Activated T-helper 2 cell treated with anti-CD3 and anti-CD28 coated beads, Interferon-gamma antibody, Interleukin-2, Interleukin-4, amounts not matched to agents 10 μg/mL and 5 μg/mL and 100 μg/mL, durations not matched to agents 14 hours and 24 hours and 36 hours (primary cell): ENCODE measurements at regions of chr3 and their contacts with region 1.

Region 1: GRCh38 chr3:37974121-37975083 is 16.2 kb upstream of the VILL start:
- DNase-seq: peak; percentile 51
- H3K4me3 Mint-ChIP-seq: no peak overlapping the region
- H3K27ac Mint-ChIP-seq: no peak overlapping the region
- H3K4me1 Mint-ChIP-seq: peaks cover 6% of the 10 kb centered on the region
- H3K27me3 Mint-ChIP-seq: no peaks in the 10 kb centered on the region

Region 2: GRCh38 chr3:37855363-37855970 is 118.9 kb before region 1 on chr3:
- intact Hi-C with region 1: loop called (anchors 2 kb)
- DNase-seq: peak; percentile 65
- H3K4me3 Mint-ChIP-seq: no peak overlapping the region
- H3K27ac Mint-ChIP-seq: no peak overlapping the region
- H3K4me1 Mint-ChIP-seq: peaks cover 8% of the 10 kb centered on the region
- H3K27me3 Mint-ChIP-seq: no peaks in the 10 kb centered on the region

Region 3: GRCh38 chr3:37993820-37994638 is 19.6 kb after region 1 on chr3:
- intact Hi-C with region 1: loop called (anchors 1 kb)
- DNase-seq: peak; percentile 54
- H3K4me3 Mint-ChIP-seq: peak overlapping the region; percentile 83
- H3K27ac Mint-ChIP-seq: peak overlapping the region; percentile 87
- H3K4me1 Mint-ChIP-seq: peaks cover 43% of the 10 kb centered on the region
- H3K27me3 Mint-ChIP-seq: no peaks in the 10 kb centered on the region

Region 4: DNA sequence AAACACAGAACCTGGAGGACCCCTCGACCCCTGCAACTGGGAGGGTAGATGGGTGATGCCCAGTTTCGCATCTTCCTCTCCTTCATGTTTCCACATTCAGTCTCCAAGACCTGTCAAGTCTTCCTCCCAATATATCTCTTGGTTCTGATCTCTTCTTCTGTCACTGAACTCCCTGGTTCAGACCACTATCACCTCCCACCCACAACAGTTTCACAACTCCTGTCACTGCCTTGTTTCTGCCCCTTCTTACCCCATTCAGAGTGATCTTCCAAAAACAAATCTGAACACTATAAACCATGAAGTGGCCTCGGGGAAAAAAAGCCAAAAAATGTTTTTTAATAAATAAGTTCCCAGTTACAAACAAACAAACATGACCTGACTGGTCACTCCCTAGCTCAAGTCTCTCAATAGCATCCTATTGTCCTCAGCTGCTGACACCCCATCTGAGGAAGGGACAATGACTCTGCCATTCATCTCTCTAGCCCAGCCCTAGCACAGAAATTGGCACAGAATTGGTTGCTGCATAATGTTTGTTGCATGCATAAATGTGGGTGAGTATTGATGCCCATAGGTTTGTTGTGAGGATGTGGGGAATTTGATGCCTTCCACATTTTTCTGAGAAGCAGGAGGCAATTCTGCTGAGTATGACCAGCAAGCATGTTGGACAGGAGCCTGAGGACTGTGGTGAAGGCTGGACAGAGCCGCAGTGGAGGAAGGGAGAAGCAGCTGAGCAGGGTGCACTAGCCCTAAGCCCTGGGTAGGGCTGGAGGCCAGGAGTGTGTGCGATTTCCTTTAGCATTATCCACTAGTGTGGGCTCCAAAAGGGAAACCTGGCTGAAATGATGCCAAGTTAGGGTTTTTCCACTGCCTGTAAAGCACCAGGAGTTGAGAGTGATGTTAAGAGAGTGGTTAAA is 360.0 kb after region 1 on chr3:
- intact Hi-C with region 1: no loop called
- DNase-seq: no peak
- H3K4me3 Mint-ChIP-seq: no peak overlapping the region
- H3K27ac Mint-ChIP-seq: no peak overlapping the region
- H3K4me1 Mint-ChIP-seq: no peaks in the 10 kb centered on the region
- H3K27me3 Mint-ChIP-seq: peaks cover 7% of the 10 kb centered on the region

Region 5: DNA sequence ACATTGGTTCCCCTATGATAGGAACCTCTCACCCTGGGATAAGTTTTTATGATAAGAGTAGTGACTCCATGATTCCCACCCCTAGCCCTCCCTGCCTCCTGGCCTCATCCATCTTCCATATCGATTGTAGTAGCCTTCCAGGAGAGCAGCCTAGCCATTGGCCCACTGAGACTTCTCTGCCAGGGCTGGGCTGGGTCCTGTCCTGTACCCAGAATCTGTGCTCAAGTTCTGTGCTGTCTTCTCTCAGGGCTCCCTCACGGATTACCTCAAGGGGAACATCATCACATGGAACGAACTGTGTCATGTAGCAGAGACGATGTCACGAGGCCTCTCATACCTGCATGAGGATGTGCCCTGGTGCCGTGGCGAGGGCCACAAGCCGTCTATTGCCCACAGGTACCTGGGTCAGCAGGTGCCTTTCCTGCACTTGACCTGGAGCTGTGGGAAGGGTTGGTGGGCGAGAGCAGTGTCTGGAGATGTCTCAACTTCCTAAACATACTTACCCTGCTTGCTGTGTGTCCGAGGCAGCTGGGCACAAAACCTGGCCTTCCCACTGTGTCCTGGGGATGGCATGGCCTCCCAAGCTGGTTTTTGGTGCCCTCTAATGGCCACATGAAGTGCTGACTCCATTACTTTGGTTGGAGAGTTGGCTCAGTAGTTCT is 505.2 kb after region 1 on chr3:
- intact Hi-C with region 1: loop called (anchors 5 kb)
- DNase-seq: no peak
- H3K4me3 Mint-ChIP-seq: no peak overlapping the region
- H3K27ac Mint-ChIP-seq: no peak overlapping the region
- H3K4me1 Mint-ChIP-seq: peaks cover 2% of the 10 kb centered on the region
- H3K27me3 Mint-ChIP-seq: no peaks in the 10 kb centered on the region

Region 6: GRCh38 chr3:38521391-38521987 is 547.1 kb after region 1 on chr3:
- intact Hi-C with region 1: no loop called
- DNase-seq: peak; percentile 28
- H3K4me3 Mint-ChIP-seq: no peak overlapping the region
- H3K27ac Mint-ChIP-seq: no peak overlapping the region
- H3K4me1 Mint-ChIP-seq: peaks cover 21% of the 10 kb centered on the region
- H3K27me3 Mint-ChIP-seq: no peaks in the 10 kb centered on the region